Gastrocnemius medialis (tissue), 4 donors: ENCODE measurements at regions of chr19 and their contacts with region 1.

Region 1: DNA sequence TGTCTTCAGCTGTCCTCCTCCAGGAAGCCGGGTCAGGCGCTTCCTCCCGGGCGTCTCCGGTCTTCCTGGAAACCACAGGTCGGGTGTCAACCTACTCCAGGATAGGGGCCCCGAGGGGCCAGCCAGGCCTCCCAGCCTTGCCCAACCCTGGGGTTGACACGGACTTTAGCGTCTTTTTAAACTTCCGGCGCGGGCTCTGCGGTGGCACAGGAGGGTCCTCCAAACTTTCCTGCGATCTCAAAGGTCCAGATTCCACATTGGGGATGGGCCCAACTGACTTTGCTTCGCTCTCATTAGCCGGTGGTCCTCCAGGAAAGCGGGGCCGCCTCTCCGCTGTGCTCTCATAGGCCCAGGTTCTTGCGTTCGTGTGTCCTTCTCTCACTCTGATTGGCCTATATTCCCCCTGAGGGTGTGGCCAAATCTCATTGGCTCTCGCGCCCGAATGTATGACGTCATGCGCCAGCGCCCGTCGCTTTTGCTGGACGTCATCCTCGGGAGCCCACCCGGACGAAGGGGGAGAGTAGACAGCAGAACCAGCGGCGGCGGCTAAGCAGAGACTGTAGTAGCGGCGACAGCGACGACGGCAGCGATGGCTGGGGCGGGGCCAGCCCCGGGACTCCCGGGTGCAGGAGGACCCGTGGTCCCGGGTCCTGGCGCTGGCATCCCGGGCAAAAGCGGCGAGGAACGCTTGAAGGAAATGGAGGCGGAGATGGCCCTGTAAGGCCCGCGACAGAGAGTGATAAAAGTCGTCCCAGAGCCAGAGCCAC is at the start of gene RBM42:
- DNase-seq: peak; percentile 97 to 98
- ATAC-seq: peak; percentile 99 to 100
- H3K4me3 ChIP-seq: peak within 1 kb of the TSS; percentile 68 to 100 (median 96)
- H3K27ac ChIP-seq: peak within 1 kb of the TSS; percentile 89 to 95 (median 94)
- H3K4me1 ChIP-seq: peaks cover 8 to 23% of the 10 kb centered on the region in 2 donors
- H3K27me3 ChIP-seq: no peaks in the 10 kb centered on the region
- CTCF ChIP-seq: peak in 2 of 5 experiments; percentile 51 to 67
- POLR2A ChIP-seq: peak; percentile 71
- total RNA-seq, gene RBM42: 45.8 to 77.8 (median 75.4) TPM

Region 2: GRCh38 chr19:35545001-35545911 is 83.5 kb before region 1 on chr19 and contains the start of gene TMEM147:
- in situ Hi-C with region 1: no loop called
- intact Hi-C with region 1: loop called (anchors 1 kb)
- DNase-seq: peak; percentile 87
- ATAC-seq: peak; percentile 91 to 92
- H3K4me3 ChIP-seq: peak within 1 kb of the TSS; percentile 71 to 90 (median 80)
- H3K27ac ChIP-seq: peak within 1 kb of the TSS; percentile 80 to 89 (median 87)
- H3K4me1 ChIP-seq: peaks cover 18 to 25% of the 10 kb centered on the region in 2 donors
- H3K27me3 ChIP-seq: no peaks in the 10 kb centered on the region
- CTCF ChIP-seq: no peak
- POLR2A ChIP-seq: peak; percentile 63 to 70
- total RNA-seq, gene TMEM147: 86.2 to 145 (median 119) TPM

Region 3: DNA sequence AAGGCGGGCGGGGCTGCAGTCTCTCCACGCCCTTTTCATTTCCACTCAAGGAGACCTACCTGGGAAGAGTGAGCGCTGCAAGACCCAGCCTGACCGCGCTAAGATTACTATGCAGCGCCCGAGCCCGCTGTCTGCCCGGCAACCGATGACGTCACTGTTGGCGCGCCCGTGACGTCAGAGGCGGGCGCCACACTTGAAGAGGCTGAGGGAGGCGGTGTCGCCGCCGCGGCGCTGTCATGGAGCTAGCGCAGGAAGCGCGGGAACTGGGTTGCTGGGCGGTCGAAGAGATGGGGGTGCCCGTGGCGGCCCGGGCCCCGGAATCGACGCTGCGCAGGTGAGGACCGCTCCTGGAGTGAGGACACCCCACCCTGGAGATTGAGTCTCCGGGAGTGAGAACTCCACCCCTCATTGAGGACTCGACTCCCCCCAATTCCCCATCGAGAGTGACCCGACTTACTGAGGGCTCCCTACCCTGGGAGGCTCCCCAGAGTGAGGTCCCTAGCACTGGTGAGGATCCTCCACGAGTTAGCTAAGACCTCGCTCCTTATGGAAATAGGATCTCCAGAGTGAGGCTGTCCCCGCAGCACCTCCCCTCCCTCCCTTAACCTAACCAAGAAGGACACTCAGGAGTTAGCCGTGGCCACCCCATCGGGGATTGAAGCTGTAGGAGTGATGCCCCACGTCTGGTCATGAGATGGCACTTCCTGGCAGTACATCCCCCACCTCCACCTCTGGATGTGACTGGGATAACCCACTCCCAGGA is 16.0 kb before region 1 on chr19 and contains the start of gene HAUS5:
- in situ Hi-C with region 1: no loop called
- intact Hi-C with region 1: loop called (anchors 1 kb)
- DNase-seq: peak; percentile 82 to 92
- ATAC-seq: peak; percentile 97 to 99
- H3K4me3 ChIP-seq: peak within 1 kb of the TSS; percentile 78 to 90 (median 86)
- H3K27ac ChIP-seq: peak within 1 kb of the TSS; percentile 67 to 75 (median 72)
- H3K4me1 ChIP-seq: peaks cover 5 to 15% of the 10 kb centered on the region in 2 donors
- H3K27me3 ChIP-seq: no peaks in the 10 kb centered on the region
- CTCF ChIP-seq: peak in 2 of 5 experiments; percentile 16 to 43
- POLR2A ChIP-seq: no peak
- total RNA-seq, gene HAUS5: 2.5 to 4.8 (median 3.4) TPM

Region 4: DNA sequence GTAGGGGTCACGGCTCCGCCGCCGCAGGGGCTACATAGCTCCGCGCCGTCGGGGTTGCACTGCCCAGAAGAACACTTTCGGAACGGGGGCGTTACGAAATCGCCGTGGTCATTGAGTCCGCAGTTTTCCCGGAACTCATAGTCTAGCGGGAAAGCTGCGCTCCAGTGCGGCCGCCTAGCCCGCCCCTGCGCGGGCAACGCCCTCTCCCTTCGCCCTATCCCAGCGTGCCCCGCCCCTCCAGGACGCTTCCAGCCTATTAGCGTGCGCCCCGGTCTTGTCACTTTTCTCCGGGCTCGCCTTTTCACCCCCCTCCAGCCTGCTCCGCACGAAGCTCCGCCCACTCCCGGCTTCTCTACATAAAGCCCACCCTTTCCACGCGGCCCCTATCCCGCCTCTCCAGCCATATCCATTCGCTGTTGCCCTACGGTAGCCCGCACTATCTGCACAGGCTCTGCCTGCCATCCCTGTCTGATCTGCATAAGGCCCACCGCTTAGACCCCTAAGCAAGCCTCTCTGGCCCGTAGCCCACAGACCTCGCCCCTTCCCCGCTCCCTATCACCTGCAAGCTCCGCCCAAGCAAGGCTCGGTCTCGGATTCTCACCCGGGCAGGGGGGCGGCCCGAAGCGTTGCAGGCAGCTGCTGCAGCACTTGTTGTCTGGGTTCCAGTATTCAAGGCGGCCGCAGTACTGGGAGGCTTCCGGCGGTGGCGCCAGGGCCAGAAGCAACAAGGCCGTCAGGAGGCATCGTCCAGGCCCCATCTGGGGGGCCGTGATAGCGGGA is 111.9 kb after region 1 on chr19:
- in situ Hi-C with region 1: no loop called
- intact Hi-C with region 1: no loop called
- DNase-seq: peak; percentile 96 to 98
- ATAC-seq: peak; percentile 74
- H3K4me3 ChIP-seq: peak overlapping the region; percentile 52 to 88 (median 78)
- H3K27ac ChIP-seq: peak overlapping the region; percentile 77 to 86 (median 82)
- H3K4me1 ChIP-seq: peaks cover 20 to 26% of the 10 kb centered on the region in 2 donors
- H3K27me3 ChIP-seq: no peaks in the 10 kb centered on the region
- CTCF ChIP-seq: peak in 3 of 5 experiments; percentile 9 to 34 (median 24)
- POLR2A ChIP-seq: peak in 1 of 2 donors; percentile 56